ENCODE measurements at regions of chr17 and their contacts with region 1.

Region 1: GRCh38 chr17:700504-701094 is 14.0 kb downstream of the VPS53 start:
- DNase-seq: peak; percentile 72
- H3K4me3 Mint-ChIP-seq: no peak overlapping the region
- H3K27ac Mint-ChIP-seq: no peak overlapping the region
- H3K4me1 Mint-ChIP-seq: peaks cover 2% of the 10 kb centered on the region
- H3K27me3 Mint-ChIP-seq: no peaks in the 10 kb centered on the region

Region 2: DNA sequence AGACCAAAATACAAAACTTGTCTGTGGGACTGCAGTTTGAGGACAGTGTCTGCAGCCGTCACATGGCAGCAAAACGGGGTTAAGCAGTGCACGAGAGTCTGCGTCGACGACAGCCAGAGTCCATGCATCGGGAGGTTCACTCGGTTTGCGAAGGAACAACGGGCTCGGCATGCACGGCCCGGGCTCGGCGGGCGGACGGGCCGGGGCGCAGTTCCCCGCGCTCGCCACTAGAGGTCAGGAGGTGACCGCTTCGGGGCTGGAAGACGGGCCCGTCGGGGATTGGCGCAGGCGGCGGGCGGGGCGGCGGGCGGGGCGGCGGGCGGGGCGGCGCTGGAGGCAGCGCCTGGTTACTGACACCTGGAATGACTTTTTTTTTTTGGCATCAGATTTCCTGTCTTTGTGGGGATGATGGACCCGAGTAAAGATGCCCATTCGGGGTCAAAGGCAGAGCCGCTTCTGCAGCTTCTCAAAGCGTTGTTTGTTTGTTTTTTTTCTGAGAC is 556.8 kb before region 1 on chr17:
- intact Hi-C with region 1: loop called (anchors 2 kb)
- DNase-seq: peak; percentile 97
- H3K4me3 Mint-ChIP-seq: no peak overlapping the region
- H3K27ac Mint-ChIP-seq: no peak overlapping the region
- H3K4me1 Mint-ChIP-seq: peaks cover 5% of the 10 kb centered on the region
- H3K27me3 Mint-ChIP-seq: peaks cover 7% of the 10 kb centered on the region

Region 3: DNA sequence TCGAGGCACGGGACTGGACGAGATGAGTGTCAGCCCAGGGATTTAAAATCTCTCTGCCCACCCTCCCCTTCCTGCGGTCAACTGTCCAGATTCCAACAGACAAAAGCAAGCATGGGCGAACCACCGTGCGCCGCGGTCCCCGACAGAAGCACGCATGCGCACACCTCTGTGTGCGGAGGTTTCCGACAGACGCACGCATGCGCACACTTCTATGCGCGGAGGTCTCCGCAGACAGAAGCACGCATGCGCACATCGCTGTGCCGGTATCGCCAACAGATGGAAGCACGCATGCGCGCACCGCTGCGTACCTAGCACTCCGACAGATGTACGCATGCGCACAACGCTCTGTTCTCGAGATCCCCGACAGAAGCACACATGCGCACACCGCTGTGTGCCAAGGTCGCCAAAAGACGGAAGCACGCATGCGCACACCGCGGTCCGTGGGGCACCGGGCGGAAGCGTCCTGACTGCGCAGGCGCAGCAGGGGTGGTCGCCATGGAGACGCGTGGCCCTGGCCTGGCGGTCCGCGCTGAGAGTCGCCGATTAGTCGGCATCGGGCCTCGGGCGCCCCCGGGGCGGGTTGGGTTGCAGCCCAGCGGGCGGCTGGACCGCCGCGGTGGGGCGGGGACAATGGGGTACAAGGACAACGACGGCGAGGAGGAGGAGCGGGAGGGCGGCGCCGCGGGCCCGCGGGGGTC is 290.6 kb before region 1 on chr17:
- intact Hi-C with region 1: loop called (anchors 1 kb)
- DNase-seq: peak; percentile 100
- H3K4me3 Mint-ChIP-seq: peak overlapping the region; percentile 93
- H3K27ac Mint-ChIP-seq: peak overlapping the region; percentile 100
- H3K4me1 Mint-ChIP-seq: peaks cover 57% of the 10 kb centered on the region
- H3K27me3 Mint-ChIP-seq: peaks cover 5% of the 10 kb centered on the region

Measured in activated CD4-positive, alpha-beta T cell treated with anti-CD3 and anti-CD28 coated beads, Interleukin-2, amount 10 ng/mL, durations not matched to agents 24 days and 14 days (primary cell).